Right ventricle myocardium superior (tissue), 1 donor: ENCODE measurements at regions of chr11 and their contacts with region 1.

Region 1: GRCh38 chr11:107577346-107577711 is 11.8 kb upstream of the ALKBH8 start:
- DNase-seq: no peak
- ATAC-seq: no peak

Region 2: GRCh38 chr11:107648242-107648641 is 70.9 kb after region 1 on chr11:
- intact Hi-C with region 1: no loop called
- DNase-seq: no peak
- ATAC-seq: no peak

Region 3: GRCh38 chr11:107689317-107690202 is 112.2 kb after region 1 on chr11:
- intact Hi-C with region 1: loop called (anchors 5 kb)
- DNase-seq: peak; percentile 70
- ATAC-seq: peak; percentile 88